Right cardiac atrium (tissue), 5 donors: ENCODE measurements at regions of chr6 and their contacts with region 1.

Region 1: GRCh38 chr6:142692942-142693341 is 252.0 kb downstream of the HIVEP2 start:
- DNase-seq: peak; percentile 61 to 70 (median 61)
- ATAC-seq: peak; percentile 69 to 85
- H3K4me3 ChIP-seq: no peak overlapping the region
- H3K27ac ChIP-seq: no peak overlapping the region
- H3K4me1 ChIP-seq: no peaks in the 10 kb centered on the region
- H3K27me3 ChIP-seq: no peaks in the 10 kb centered on the region

Region 2: DNA sequence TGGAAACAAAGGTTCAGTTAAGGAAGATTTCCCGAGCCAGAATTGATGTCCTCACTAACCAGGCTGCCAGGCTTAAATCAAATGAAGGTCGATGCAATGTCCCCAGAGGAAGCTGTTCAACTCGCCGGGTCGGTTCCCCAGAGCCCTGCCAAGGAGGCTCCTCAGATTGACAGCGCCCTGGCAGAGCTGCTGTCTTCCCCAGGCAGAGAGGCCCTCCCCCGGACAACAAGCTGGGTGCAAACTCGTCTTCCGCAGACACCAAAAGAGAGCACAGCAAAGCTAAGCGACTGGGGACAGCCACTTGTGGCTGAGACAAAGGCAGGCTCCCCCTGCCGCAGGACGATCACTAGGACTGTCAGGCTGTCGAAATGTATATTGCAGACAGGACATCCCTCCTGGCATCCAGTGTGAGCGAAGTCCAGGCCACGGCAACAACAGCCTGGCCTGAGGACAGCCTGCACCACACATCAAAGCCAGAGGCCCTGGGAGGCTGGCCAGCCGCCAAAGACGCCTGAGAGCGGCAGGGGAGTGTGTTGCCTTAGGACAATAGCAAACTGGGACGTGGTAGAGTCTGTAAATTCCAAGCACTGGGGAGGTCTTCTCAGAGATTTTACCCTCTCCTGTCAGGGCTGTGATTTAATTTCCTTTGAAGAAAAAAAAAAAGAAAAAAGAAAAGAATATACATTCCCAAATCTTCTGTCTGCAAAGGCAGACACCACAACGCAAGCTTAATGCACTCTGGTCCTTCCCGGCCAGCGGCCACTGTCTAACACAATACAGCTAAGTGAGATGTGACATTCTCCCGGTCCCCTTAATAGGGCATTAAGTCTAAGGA is 152.9 kb after region 1 on chr6:
- intact Hi-C with region 1: loop called in 1 of 4 experiments (anchors 5 kb)
- DNase-seq: peak; percentile 90 to 96 (median 95)
- ATAC-seq: peak; percentile 97 to 98
- H3K4me3 ChIP-seq: peak overlapping the region; percentile 28
- H3K27ac ChIP-seq: peak overlapping the region; percentile 98
- H3K4me1 ChIP-seq: peaks cover 11% of the 10 kb centered on the region
- H3K27me3 ChIP-seq: no peaks in the 10 kb centered on the region

Region 3: DNA sequence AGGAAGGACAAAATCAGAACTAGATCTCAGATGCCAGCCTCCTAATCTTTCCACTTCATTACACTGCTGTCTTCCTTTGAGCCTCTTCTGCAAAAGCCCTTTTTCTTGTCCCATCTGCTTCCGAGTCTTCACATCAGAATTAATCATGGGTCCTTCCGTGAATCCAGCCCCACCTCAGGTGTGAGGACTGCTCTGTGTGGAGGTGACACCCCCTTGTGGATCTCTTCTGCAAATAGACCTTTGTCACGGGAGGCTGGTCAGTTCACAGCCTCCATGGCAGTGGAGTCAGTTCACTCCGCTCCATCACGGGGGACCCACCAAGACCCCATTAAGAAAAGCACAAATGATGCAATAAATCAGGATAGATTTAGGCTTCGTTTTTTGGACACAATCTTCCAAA is 586.4 kb after region 1 on chr6:
- intact Hi-C with region 1: loop called in 1 of 4 experiments (anchors 10 kb)
- DNase-seq: peak in 1 of 3 donors; percentile 15
- ATAC-seq: peak; percentile 60 to 63
- H3K4me3 ChIP-seq: no peak overlapping the region
- H3K27ac ChIP-seq: no peak overlapping the region
- H3K4me1 ChIP-seq: no peaks in the 10 kb centered on the region
- H3K27me3 ChIP-seq: no peaks in the 10 kb centered on the region

Region 4: GRCh38 chr6:143427109-143427817 is 734.3 kb after region 1 on chr6:
- intact Hi-C with region 1: loop called (anchors 2 to 10 kb)
- DNase-seq: peak; percentile 60 to 89 (median 88)
- ATAC-seq: peak; percentile 96
- H3K4me3 ChIP-seq: no peak overlapping the region
- H3K27ac ChIP-seq: no peak overlapping the region
- H3K4me1 ChIP-seq: no peaks in the 10 kb centered on the region
- H3K27me3 ChIP-seq: no peaks in the 10 kb centered on the region